ENCODE measurements at regions of chr15 and their contacts with region 1.

Region 1: DNA sequence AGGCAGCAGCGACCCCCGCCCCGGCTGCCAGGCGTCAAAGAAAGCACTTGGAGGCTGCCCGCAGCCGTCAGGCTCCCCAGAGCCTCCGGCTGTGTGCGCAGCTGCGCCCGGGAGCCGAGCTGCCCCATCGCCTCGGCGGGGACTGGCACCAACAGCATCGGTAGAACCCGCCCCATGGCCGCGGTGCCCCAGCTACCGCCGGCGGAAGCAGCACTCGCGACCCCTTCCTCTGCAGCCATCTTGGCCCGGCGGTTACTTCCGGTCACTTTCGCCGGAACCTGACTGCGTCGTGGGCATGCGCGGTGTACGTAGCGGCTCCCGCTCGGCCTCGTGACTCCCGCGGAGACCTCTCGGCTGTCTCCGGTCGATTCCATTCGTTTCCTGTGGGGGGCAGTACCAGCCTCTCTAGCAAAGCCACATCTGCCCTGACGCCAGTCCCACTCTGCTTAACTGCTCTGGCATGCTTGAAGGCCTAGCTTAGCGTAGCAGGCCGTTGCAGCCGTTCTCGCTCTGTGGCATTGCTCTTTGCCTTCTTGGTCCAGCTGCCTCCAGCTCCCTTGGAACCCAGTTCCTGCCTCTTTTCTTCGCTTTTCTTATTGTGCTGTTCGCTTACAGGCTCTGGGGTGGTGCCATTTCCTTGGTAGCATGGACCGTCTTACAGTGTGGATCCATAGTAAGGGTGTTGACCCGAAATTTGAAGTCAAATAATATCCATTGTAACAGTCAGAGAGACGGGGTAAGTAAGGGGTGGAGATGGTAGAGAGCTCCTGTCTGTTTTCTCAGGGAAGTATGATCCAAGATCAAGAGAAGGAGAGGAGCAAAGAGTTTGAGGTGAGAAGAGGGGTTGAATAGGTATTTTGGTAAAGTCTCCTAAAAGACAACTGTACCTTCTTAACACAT is at the start of gene SPG11:
- DNase-seq: peak; percentile 96 to 97
- H3K4me3 ChIP-seq: peak within 1 kb of the TSS; percentile 62
- H3K4me3 Mint-ChIP-seq: peak within 1 kb of the TSS; percentile 92
- H3K27ac Mint-ChIP-seq: peak within 1 kb of the TSS; percentile 46
- H3K4me1 ChIP-seq: peaks cover 6% of the 10 kb centered on the region
- H3K4me1 Mint-ChIP-seq: peaks cover 6% of the 10 kb centered on the region
- H3K27me3 ChIP-seq: no peaks in the 10 kb centered on the region
- H3K27me3 Mint-ChIP-seq: no peaks in the 10 kb centered on the region
- CTCF ChIP-seq: peak; percentile 74 to 88
- total RNA-seq, gene SPG11: 43.3 and 45.7 TPM in 2 replicates

Region 2: DNA sequence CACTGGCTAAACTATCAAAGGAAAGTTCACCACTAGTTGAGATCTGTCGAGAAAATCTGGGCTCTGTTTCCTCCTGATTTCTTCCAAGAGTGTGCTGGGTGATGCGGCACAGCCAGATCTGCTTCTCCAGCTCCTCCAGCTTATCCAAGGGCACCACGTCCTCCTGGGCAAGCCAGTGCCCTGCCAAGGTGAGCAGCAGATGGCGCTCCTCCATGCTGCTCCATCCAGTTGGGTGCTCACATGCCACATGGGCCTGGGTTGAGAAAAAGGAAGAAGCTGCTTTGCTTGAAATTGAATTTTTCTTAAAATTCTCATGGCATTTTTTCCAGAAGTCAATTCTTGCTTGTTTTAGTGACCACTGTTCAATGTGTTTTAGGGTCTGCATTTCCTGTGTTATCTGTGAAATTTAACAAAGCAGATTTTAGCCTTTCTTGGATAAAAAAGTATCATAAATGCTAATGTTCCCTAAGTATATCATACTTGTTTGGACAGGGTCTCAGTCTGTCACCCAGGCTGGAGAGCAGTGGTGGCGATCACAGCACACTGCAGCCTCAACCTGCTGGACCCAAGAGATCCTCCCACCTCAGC is 79.4 kb before region 1 on chr15:
- CTCF ChIA-PET with region 1: interaction called, 16 read pairs
- POLR2A ChIA-PET with region 1: no interaction called
- intact Hi-C with region 1: loop called (anchors 2 kb)
- DNase-seq: peak in 1 of 2 experiments; percentile 48
- H3K4me3 ChIP-seq: no peak overlapping the region
- H3K4me3 Mint-ChIP-seq: no peak overlapping the region
- H3K27ac Mint-ChIP-seq: no peak overlapping the region
- H3K4me1 ChIP-seq: no peaks in the 10 kb centered on the region
- H3K4me1 Mint-ChIP-seq: no peaks in the 10 kb centered on the region
- H3K27me3 ChIP-seq: no peaks in the 10 kb centered on the region
- H3K27me3 Mint-ChIP-seq: no peaks in the 10 kb centered on the region
- CTCF ChIP-seq: peak in 1 of 2 experiments; percentile 49

Region 3: DNA sequence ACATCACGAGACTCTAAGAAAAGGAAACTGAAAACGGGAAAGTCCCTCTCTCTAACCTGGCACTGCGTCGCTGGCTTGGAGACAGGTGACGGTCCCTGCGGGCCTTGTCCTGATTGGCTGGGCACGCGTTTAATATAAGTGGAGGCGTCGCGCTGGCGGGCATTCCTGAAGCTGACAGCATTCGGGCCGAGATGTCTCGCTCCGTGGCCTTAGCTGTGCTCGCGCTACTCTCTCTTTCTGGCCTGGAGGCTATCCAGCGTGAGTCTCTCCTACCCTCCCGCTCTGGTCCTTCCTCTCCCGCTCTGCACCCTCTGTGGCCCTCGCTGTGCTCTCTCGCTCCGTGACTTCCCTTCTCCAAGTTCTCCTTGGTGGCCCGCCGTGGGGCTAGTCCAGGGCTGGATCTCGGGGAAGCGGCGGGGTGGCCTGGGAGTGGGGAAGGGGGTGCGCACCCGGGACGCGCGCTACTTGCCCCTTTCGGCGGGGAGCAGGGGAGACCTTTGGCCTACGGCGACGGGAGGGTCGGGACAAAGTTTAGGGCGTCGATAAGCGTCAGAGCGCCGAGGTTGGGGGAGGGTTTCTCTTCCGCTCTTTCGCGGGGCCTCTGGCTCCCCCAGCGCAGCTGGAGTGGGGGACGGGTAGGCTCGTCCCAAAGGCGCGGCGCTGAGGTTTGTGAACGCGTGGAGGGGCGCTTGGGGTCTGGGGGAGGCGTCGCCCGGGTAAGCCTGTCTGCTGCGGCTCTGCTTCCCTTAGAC is 47.9 kb after region 1 on chr15 and contains the start of gene B2M:
- CTCF ChIA-PET with region 1: interaction called, 27 read pairs
- POLR2A ChIA-PET with region 1: interaction called, 28 read pairs
- intact Hi-C with region 1: loop called (anchors 1 kb)
- DNase-seq: peak; percentile 93 to 94
- H3K4me3 ChIP-seq: peak within 1 kb of the TSS; percentile 66
- H3K4me3 Mint-ChIP-seq: peak within 1 kb of the TSS; percentile 100
- H3K27ac Mint-ChIP-seq: peak within 1 kb of the TSS; percentile 99
- H3K4me1 ChIP-seq: peaks cover 14% of the 10 kb centered on the region
- H3K4me1 Mint-ChIP-seq: no peaks in the 10 kb centered on the region
- H3K27me3 ChIP-seq: no peaks in the 10 kb centered on the region
- H3K27me3 Mint-ChIP-seq: no peaks in the 10 kb centered on the region
- CTCF ChIP-seq: no peak
- total RNA-seq, gene B2M: 269 and 273 TPM in 2 replicates

Region 4: DNA sequence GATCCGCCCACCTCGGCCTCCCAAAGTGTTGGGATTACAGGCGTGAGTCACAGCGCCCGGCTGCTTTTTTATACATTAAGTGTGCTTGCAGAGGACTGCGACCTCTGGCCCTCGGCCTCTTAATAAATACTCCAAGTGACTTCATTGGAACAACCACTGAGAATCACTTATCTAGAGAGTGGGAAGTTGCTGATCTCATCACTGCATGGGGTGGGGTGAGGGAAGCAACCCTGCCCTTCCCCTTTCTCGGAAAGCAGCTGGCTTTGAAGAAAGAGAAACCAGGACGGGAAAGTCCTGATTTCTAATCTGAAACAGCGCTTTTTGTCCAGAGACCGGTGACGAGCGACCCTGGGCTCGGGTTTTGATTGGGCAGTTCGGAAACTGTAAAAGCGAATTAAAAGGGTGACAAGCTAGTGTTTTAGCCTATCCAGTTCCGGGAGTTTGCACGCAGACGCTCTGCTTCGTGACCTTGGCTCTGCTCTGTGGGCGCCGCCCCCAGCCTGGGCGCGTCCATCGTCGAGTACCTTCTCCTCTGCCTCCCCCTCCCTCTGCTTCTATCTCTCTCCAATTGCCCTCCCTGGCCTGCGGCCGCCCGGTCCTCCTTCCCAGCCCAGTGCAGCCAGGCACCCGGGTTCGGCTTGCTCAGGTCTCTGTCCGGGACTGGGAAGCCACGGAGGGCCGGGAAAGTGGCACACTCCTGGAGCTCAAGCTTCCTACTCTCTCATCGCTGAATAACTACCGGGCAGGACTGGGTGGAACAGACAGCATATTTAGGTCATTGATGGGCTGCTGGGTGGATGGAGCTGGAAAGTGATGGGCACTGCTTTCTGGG is 65.1 kb after region 1 on chr15:
- CTCF ChIA-PET with region 1: interaction called, 30 read pairs
- POLR2A ChIA-PET with region 1: interaction called, 24 read pairs
- intact Hi-C with region 1: loop called (anchors 2 kb)
- DNase-seq: peak; percentile 94 to 95
- H3K4me3 ChIP-seq: peak overlapping the region; percentile 68
- H3K4me3 Mint-ChIP-seq: peak overlapping the region; percentile 86
- H3K27ac Mint-ChIP-seq: peak overlapping the region; percentile 97
- H3K4me1 ChIP-seq: peaks cover 3% of the 10 kb centered on the region; the same call in 1 of the 2 replicates
- H3K4me1 Mint-ChIP-seq: no peaks in the 10 kb centered on the region
- H3K27me3 ChIP-seq: no peaks in the 10 kb centered on the region
- H3K27me3 Mint-ChIP-seq: no peaks in the 10 kb centered on the region
- CTCF ChIP-seq: no peak

Region 5: DNA sequence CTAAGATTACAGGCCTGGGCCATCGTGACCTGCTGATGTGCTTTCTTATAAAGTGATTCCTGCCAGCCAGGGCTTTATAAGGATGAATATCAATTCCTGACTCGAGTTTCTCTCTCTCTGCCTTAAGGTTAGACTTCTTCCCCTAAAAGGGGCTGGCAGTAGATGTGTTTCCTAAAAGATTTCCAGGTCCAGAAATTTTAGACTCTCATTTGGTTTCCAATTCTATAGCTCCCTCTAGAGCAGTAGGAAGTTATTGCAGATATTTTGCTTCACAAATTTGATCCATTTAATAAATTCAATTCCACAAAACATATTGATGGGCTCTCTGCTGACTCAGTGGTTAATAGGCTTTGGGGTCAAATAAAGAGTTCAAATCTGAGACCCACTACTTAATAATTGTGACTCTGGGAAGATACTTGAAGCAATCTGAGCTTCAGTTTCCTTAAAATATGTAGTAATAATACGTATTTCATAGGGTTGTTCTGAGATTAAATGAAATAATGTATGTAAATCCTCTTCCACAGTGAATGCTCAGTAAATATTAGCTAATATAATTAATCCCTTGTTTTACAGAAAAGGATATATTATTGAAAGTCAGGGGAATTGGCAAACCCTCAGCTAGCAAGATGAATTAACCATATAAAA is 74.8 kb after region 1 on chr15:
- CTCF ChIA-PET with region 1: interaction called, 58 read pairs
- POLR2A ChIA-PET with region 1: interaction called, 12 read pairs
- intact Hi-C with region 1: loop called (anchors 1 kb)
- DNase-seq: peak in 1 of 2 experiments; percentile 56
- H3K4me3 ChIP-seq: no peak overlapping the region
- H3K4me3 Mint-ChIP-seq: no peak overlapping the region
- H3K27ac Mint-ChIP-seq: no peak overlapping the region
- H3K4me1 ChIP-seq: no peaks in the 10 kb centered on the region
- H3K4me1 Mint-ChIP-seq: no peaks in the 10 kb centered on the region
- H3K27me3 ChIP-seq: no peaks in the 10 kb centered on the region
- H3K27me3 Mint-ChIP-seq: no peaks in the 10 kb centered on the region
- CTCF ChIP-seq: peak; percentile 54

Region 6: GRCh38 chr15:44788748-44789147 is 125.1 kb after region 1 on chr15:
- CTCF ChIA-PET with region 1: no interaction called
- POLR2A ChIA-PET with region 1: no interaction called
- intact Hi-C with region 1: no loop called
- DNase-seq: no peak
- H3K4me3 ChIP-seq: no peak overlapping the region
- H3K4me3 Mint-ChIP-seq: no peak overlapping the region
- H3K27ac Mint-ChIP-seq: no peak overlapping the region
- H3K4me1 ChIP-seq: 0 out of 2 replicates have a peak, but pooled peaks cover 3% of the 10 kb centered on the region
- H3K4me1 Mint-ChIP-seq: no peaks in the 10 kb centered on the region
- H3K27me3 ChIP-seq: no peaks in the 10 kb centered on the region; the same call in 1 of the 2 replicates
- H3K27me3 Mint-ChIP-seq: peaks cover 13% of the 10 kb centered on the region
- CTCF ChIP-seq: no peak

Region 7: DNA sequence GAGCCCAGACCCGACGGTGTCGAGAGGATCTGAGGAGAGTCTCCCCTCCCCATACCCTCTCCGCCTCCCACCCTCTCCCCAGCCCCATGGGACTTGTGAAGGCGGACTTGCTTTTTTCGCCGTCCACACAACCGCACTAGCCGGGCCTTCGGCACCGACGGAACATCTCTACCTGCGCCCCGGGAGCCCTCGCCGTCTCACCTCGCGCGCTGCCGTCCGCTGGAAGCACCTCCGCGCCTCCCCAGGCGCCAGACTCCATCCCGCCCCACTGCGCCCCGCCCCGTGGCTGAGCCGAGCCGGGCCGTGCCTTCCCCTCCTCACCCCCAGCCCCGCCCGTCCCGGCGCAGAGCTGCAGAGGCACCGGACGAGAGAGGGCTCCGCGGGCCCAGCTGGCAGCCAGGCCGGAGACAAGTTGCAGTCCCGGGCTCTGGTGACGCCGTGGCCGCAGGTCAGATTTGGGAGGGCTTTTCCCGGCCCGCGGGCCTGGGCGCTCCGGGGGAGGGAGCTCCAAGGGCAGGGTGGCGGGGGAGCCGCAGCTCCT is 466.1 kb after region 1 on chr15 and contains the starts of genes DUOX1 and DUOXA1:
- CTCF ChIA-PET with region 1: no interaction called
- POLR2A ChIA-PET with region 1: no interaction called
- intact Hi-C with region 1: no loop called
- DNase-seq: no peak
- H3K4me3 ChIP-seq: no peak within 1 kb of the TSS
- H3K4me3 Mint-ChIP-seq: no peak within 1 kb of the TSS
- H3K27ac Mint-ChIP-seq: no peak within 1 kb of the TSS
- H3K4me1 ChIP-seq: no peaks in the 10 kb centered on the region
- H3K4me1 Mint-ChIP-seq: peaks cover 10% of the 10 kb centered on the region
- H3K27me3 ChIP-seq: no peaks in the 10 kb centered on the region
- H3K27me3 Mint-ChIP-seq: no peaks in the 10 kb centered on the region
- CTCF ChIP-seq: no peak
- total RNA-seq, gene DUOX1: 0.14 and 0.56 TPM in 2 replicates
- total RNA-seq, gene DUOXA1: 0.39 TPM in 1 of 2 replicates, not detected in the other

Measured in Caco-2 (cell line).